ENCODE measurements at regions of chr10 and their contacts with region 1.

Region 1: GRCh38 chr10:122342293-122343134 is 32.0 kb upstream of the PLEKHA1 start:
- DNase-seq: peak; percentile 46 to 77 (median 66)
- ATAC-seq: peak; percentile 79
- H3K4me3 ChIP-seq: no peak overlapping the region
- H3K4me3 Mint-ChIP-seq: no peak overlapping the region
- H3K27ac ChIP-seq: no peak overlapping the region
- H3K27ac Mint-ChIP-seq: no peak overlapping the region
- H3K4me1 ChIP-seq: no peaks in the 10 kb centered on the region
- H3K4me1 Mint-ChIP-seq: peaks cover 3% of the 10 kb centered on the region
- H3K27me3 ChIP-seq: no peaks in the 10 kb centered on the region
- H3K27me3 Mint-ChIP-seq: no peaks in the 10 kb centered on the region
- CTCF ChIP-seq: peak; percentile 89

Region 2: GRCh38 chr10:122298598-122299301 is 43.8 kb before region 1 on chr10:
- CTCF ChIA-PET with region 1: interaction called, 16 read pairs
- POLR2A ChIA-PET with region 1: no interaction called
- intact Hi-C with region 1: loop called (anchors 1 kb)
- DNase-seq: peak; percentile 44 to 79 (median 67)
- ATAC-seq: peak; percentile 86
- H3K4me3 ChIP-seq: no peak overlapping the region
- H3K4me3 Mint-ChIP-seq: no peak overlapping the region
- H3K27ac ChIP-seq: no peak overlapping the region
- H3K27ac Mint-ChIP-seq: no peak overlapping the region
- H3K4me1 ChIP-seq: peaks cover 10% of the 10 kb centered on the region
- H3K4me1 Mint-ChIP-seq: peaks cover 10% of the 10 kb centered on the region
- H3K27me3 ChIP-seq: no peaks in the 10 kb centered on the region
- H3K27me3 Mint-ChIP-seq: peaks cover 2% of the 10 kb centered on the region
- CTCF ChIP-seq: peak; percentile 85

Region 3: DNA sequence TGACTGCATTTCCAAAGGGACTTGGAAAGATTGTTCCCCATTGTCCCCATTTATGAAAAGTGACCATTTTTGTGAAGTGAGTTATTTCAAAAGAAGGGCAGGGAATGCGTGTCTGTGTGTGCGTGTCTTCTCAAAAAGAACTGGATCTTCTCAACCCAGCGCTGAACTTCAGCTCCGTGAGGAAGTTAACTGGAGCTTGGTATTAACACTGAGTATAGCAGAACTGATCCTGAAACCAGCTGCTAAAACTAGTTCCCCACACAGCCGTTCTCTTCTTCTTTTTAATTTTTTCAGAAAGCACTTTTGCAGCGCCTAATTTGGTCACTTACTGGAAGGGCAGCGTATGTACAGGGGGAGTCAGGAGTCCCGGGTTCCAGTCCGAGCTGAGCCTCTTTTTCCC is 13.8 kb before region 1 on chr10:
- CTCF ChIA-PET with region 1: interaction called, 11 read pairs
- POLR2A ChIA-PET with region 1: no interaction called
- intact Hi-C with region 1: no loop called
- DNase-seq: no peak
- ATAC-seq: no peak
- H3K4me3 ChIP-seq: no peak overlapping the region
- H3K4me3 Mint-ChIP-seq: no peak overlapping the region
- H3K27ac ChIP-seq: no peak overlapping the region
- H3K27ac Mint-ChIP-seq: no peak overlapping the region
- H3K4me1 ChIP-seq: no peaks in the 10 kb centered on the region
- H3K4me1 Mint-ChIP-seq: no peaks in the 10 kb centered on the region
- H3K27me3 ChIP-seq: no peaks in the 10 kb centered on the region
- H3K27me3 Mint-ChIP-seq: peaks cover 36% of the 10 kb centered on the region
- CTCF ChIP-seq: no peak

Region 4: GRCh38 chr10:122368502-122369256 is 26.2 kb after region 1 on chr10:
- CTCF ChIA-PET with region 1: interaction called, 14 read pairs
- POLR2A ChIA-PET with region 1: interaction called, 4 read pairs
- intact Hi-C with region 1: no loop called
- DNase-seq: no peak
- ATAC-seq: no peak
- H3K4me3 ChIP-seq: no peak overlapping the region
- H3K4me3 Mint-ChIP-seq: no peak overlapping the region
- H3K27ac ChIP-seq: no peak overlapping the region
- H3K27ac Mint-ChIP-seq: no peak overlapping the region
- H3K4me1 ChIP-seq: peaks cover 4% of the 10 kb centered on the region
- H3K4me1 Mint-ChIP-seq: peaks cover 5% of the 10 kb centered on the region
- H3K27me3 ChIP-seq: no peaks in the 10 kb centered on the region
- H3K27me3 Mint-ChIP-seq: peaks cover 13% of the 10 kb centered on the region
- CTCF ChIP-seq: no peak

Region 5: DNA sequence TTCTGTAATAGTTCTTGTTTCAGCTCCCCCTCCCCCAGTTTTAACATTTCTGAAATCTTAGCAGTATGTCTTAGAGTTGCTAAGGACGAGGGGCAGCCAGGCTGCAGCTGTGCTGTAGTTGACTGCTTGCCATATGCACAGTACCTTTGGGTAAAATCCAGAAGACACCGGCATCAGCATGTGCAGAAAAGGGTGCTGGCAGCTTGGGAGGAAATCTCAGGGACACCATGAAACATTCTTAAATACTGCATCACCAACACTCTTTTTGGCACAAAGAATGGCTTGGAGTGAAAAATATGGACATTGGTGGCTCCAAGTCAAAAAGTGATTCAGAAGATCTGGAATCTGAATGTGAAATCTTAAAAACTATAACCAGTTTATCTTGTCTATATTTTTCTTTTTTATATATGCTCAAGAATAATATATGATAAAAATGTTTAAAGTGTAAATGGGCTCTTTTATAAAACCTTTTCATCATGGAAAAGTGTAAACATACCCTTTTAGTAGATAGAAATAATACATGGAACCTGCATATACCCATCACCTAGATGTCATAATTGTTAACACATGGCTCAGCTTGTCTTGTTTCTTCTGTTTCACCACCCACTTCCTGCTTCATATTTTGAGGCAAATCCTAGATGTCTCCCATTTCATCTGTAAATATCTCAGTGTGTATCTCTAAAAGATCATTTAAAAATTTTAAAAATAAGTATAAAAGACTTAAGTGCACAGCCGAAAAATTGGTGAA is 77.5 kb after region 1 on chr10:
- CTCF ChIA-PET with region 1: interaction called, 11 read pairs
- POLR2A ChIA-PET with region 1: no interaction called
- intact Hi-C with region 1: no loop called
- DNase-seq: peak in 1 of 9 experiments; percentile 23
- ATAC-seq: no peak
- H3K4me3 ChIP-seq: no peak overlapping the region
- H3K4me3 Mint-ChIP-seq: no peak overlapping the region
- H3K27ac ChIP-seq: peak overlapping the region; percentile 26 to 66
- H3K27ac Mint-ChIP-seq: peak overlapping the region; percentile 88
- H3K4me1 ChIP-seq: peaks cover 96% of the 10 kb centered on the region
- H3K4me1 Mint-ChIP-seq: peaks cover 87% of the 10 kb centered on the region
- H3K27me3 ChIP-seq: no peaks in the 10 kb centered on the region
- H3K27me3 Mint-ChIP-seq: no peaks in the 10 kb centered on the region
- CTCF ChIP-seq: no peak

Region 6: GRCh38 chr10:122441961-122442360 is 99.4 kb after region 1 on chr10:
- CTCF ChIA-PET with region 1: interaction called, 52 read pairs
- POLR2A ChIA-PET with region 1: interaction called, 4 read pairs
- intact Hi-C with region 1: no loop called
- DNase-seq: no peak
- ATAC-seq: no peak
- H3K4me3 ChIP-seq: no peak overlapping the region
- H3K4me3 Mint-ChIP-seq: no peak overlapping the region
- H3K27ac ChIP-seq: no peak overlapping the region
- H3K27ac Mint-ChIP-seq: no peak overlapping the region
- H3K4me1 ChIP-seq: no peaks in the 10 kb centered on the region
- H3K4me1 Mint-ChIP-seq: no peaks in the 10 kb centered on the region
- H3K27me3 ChIP-seq: no peaks in the 10 kb centered on the region
- H3K27me3 Mint-ChIP-seq: no peaks in the 10 kb centered on the region
- CTCF ChIP-seq: no peak